Posterior vena cava (tissue), 2 donors: ENCODE measurements at regions of chr2 and their contacts with region 1.

Region 1: DNA sequence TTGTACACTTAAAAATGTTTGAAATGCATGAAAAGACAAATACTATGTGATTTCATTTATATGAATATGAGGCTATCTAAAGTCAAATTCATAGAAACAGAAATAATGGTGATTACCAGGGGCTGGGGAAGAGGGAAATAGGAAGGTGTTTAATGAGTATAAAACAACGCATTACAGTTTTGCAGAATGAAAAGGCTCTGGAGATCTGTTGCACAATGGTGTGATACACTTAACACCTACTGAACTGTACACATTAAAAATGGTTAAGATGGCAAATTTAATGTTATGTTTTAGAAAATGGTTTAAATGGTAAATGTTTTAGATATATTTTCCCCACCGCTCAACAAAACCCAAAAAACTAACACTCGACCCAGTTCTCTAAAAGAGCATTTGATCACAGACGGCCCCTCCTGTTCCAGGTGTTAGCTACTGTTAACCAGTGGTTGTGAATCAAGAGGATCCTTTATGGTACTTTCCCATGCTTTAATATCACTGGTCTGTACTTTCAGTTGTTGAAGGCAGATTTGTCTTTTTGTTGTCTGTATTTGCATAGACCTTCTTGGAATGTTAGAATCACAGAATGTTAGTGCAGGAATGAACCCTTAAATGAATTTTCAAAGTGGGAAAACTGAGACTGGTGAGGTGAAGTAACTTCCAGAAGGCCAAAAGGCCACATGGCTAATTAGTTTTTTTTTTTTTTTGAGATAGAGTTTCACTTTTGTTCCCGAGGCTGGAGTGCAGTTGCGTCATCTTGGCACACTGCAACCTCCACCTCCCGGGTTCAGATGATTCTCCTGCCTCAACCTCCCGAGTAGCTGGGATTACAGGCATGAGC is 10.2 kb downstream of the RAB10 start:
- DNase-seq: no peak

Region 2: DNA sequence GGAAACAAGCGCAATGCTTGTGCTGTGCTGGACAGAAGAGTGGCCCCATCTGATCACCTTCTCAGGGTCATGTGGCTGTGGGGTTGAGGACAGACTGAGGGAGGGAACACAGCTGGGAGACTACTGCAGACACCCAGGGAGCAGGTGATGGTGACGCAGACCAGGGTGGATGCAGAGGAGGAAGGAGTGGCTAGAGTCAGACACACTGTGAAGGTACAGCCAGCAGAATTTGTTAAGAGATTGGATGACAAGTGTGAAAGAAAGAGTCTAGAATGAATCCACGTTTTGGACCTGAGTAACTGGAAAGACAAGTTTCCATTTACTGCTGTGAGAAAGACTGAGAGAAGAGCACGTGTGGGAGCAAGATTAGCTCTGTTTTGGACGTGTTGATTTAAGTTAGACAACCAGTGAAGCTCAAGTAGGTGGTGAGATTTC is 859.8 kb before region 1 on chr2:
- intact Hi-C with region 1: no loop called
- DNase-seq: peak; percentile 16

Region 3: DNA sequence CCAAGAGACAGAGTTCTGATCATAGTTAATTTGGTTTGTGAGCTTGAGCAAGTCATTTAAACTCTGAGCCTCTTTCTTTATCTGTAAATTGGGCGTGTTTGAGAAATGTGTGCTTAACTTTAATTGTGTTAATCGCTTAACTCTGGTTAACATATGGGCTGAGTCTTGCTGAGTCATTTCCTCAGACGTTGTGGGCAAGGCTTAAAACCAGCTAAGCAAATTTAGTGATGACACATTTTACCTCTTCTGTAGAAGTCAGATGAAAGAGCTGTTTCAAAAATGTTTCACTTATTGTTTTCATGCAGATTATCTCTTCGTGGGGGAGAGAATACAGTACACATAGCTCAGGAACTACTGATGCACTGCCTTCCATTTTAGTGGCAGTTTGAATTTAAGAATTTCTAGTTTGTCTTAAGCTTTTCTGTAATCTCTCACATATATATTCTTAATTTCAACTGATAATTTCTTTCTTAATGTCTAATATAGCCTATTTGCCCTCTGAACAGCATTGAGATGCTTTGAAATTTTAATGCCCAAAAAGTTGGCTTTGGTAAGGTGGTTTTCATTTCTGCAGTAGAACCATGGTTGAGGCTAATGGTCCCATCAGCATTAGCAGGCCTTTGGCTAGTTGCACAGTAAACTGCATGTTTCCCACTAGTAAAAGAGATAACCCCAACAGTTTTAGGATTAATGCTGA is 24.7 kb after region 1 on chr2:
- intact Hi-C with region 1: loop called in 1 of 2 experiments (anchors 1 kb)
- DNase-seq: no peak

Region 4: DNA sequence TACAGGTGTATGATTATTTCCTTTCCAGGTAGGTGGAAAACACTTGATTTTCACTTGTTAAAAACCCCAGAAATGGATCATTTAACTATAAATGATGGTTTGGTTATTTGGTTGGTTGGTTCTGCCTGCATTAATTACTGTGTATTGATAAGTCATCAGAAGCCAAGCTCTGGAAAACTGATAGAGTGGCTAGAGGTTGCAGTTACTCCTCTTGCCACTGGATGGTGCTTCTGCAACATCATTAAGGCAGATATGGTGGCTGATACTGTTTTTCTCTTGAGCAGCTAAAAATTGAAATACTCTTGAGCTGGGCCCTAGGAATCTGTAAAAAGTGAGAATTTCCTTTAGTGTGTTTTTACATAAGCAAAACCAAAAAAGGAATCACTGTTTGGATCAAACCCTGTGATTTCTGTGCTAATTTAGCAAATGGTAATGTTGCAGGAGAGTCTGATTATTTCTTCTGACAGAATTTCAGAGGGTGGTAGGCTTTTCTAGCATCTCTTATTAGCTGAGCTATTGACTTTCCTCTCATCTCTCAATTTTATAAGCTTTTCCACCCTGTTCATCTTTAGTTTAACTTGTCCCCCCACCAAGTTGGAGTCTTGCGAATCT is 44.1 kb after region 1 on chr2:
- intact Hi-C with region 1: no loop called
- DNase-seq: no peak

Region 5: GRCh38 chr2:26640331-26640745 is 596.3 kb after region 1 on chr2:
- intact Hi-C with region 1: no loop called
- DNase-seq: peak; percentile 80